ENCODE measurements at regions of chr4 and their contacts with region 1.

Region 1: GRCh38 chr4:159102622-159103383 is at the start of gene RAPGEF2:
- DNase-seq: peak; percentile 83 to 92
- H3K4me3 ChIP-seq: peak within 1 kb of the TSS; percentile 88
- H3K27ac ChIP-seq: peak within 1 kb of the TSS; percentile 77
- H3K4me1 ChIP-seq: peaks cover 34% of the 10 kb centered on the region
- H3K27me3 ChIP-seq: no peaks in the 10 kb centered on the region
- CTCF ChIP-seq: no peak
- total RNA-seq, gene RAPGEF2: 26.2 and 29.8 TPM in 2 replicates

Region 2: GRCh38 chr4:158671915-158672806 is 430.6 kb before region 1 on chr4 and contains the start of gene ETFDH:
- CTCF ChIA-PET with region 1: no interaction called
- POLR2A ChIA-PET with region 1: no interaction called
- intact Hi-C with region 1: loop called (anchors 2 kb)
- DNase-seq: peak; percentile 95 to 98
- H3K4me3 ChIP-seq: peak within 1 kb of the TSS; percentile 83
- H3K27ac ChIP-seq: peak within 1 kb of the TSS; percentile 74
- H3K4me1 ChIP-seq: peaks cover 8% of the 10 kb centered on the region
- H3K27me3 ChIP-seq: no peaks in the 10 kb centered on the region
- CTCF ChIP-seq: peak; percentile 63
- total RNA-seq, gene ETFDH: 16.9 and 21.0 TPM in 2 replicates

Region 3: GRCh38 chr4:158856852-158857251 is 246.0 kb before region 1 on chr4:
- CTCF ChIA-PET with region 1: no interaction called
- POLR2A ChIA-PET with region 1: interaction called, 6 read pairs
- intact Hi-C with region 1: loop called (anchors 2 kb)
- DNase-seq: peak in 1 of 2 experiments; percentile 52
- H3K4me3 ChIP-seq: no peak overlapping the region
- H3K27ac ChIP-seq: no peak overlapping the region
- H3K4me1 ChIP-seq: no peaks in the 10 kb centered on the region
- H3K27me3 ChIP-seq: no peaks in the 10 kb centered on the region
- CTCF ChIP-seq: peak; percentile 73

Region 4: GRCh38 chr4:158873795-158874401 is 228.9 kb before region 1 on chr4:
- CTCF ChIA-PET with region 1: no interaction called
- POLR2A ChIA-PET with region 1: no interaction called
- intact Hi-C with region 1: loop called (anchors 2 kb)
- DNase-seq: peak; percentile 61 to 98
- H3K4me3 ChIP-seq: peak overlapping the region; percentile 26; the same call in 1 of the 2 replicates
- H3K27ac ChIP-seq: peak overlapping the region; percentile 83
- H3K4me1 ChIP-seq: peaks cover 22% of the 10 kb centered on the region
- H3K27me3 ChIP-seq: no peaks in the 10 kb centered on the region
- CTCF ChIP-seq: no peak

Region 5: DNA sequence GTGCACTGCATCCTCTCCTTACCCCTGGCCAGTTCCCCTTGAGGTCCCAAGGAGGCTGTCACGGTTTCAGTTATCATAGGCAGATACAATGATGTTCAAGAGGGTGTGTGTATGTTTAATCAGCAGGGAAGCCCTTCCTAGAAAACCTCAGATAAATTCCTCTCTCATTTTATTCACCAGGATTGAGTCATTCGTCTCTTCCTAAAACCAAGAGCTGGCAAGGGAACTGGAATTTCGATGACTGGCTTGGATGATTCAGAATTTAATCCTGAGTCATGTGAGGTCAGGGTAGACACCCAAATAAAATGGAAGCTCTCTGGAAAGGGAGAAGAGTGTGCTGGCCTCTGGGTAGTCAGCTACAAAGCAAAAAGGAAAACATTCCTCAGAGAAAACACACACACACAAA is 106.1 kb before region 1 on chr4:
- CTCF ChIA-PET with region 1: no interaction called
- POLR2A ChIA-PET with region 1: no interaction called
- intact Hi-C with region 1: loop called (anchors 2 kb)
- DNase-seq: peak; percentile 41 to 93
- H3K4me3 ChIP-seq: no peak overlapping the region
- H3K27ac ChIP-seq: peak overlapping the region; percentile 78
- H3K4me1 ChIP-seq: peaks cover 25% of the 10 kb centered on the region
- H3K27me3 ChIP-seq: no peaks in the 10 kb centered on the region
- CTCF ChIP-seq: no peak

Region 6: GRCh38 chr4:159010563-159011260 is 92.1 kb before region 1 on chr4:
- CTCF ChIA-PET with region 1: no interaction called
- POLR2A ChIA-PET with region 1: no interaction called
- intact Hi-C with region 1: loop called (anchors 2 kb)
- DNase-seq: peak; percentile 24 to 64
- H3K4me3 ChIP-seq: no peak overlapping the region
- H3K27ac ChIP-seq: peak overlapping the region; percentile 71
- H3K4me1 ChIP-seq: peaks cover 39% of the 10 kb centered on the region
- H3K27me3 ChIP-seq: no peaks in the 10 kb centered on the region
- CTCF ChIP-seq: no peak

Region 7: DNA sequence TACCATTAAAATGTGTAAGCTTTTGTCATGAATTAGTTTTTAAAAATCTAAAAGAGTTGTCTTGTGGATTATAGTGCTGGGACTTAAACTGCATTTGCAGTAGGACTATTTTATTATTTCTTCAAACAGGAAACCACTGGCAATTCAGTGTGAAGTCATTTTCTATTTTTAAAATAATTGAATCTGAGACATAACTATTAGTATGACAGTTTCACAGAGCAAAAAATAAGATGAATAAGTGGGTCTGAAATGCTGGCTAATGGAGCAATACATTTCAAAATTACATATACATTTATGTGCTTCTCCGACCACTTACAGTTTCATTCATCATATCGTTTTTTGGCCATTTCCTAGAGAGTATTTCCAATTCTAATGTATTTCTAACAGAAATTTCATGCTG is 75.3 kb before region 1 on chr4:
- CTCF ChIA-PET with region 1: no interaction called
- POLR2A ChIA-PET with region 1: interaction called, 20 read pairs
- intact Hi-C with region 1: no loop called
- DNase-seq: no peak
- H3K4me3 ChIP-seq: no peak overlapping the region
- H3K27ac ChIP-seq: no peak overlapping the region
- H3K4me1 ChIP-seq: no peaks in the 10 kb centered on the region
- H3K27me3 ChIP-seq: no peaks in the 10 kb centered on the region
- CTCF ChIP-seq: no peak

Measured in PC-9 (cell line).